MCF 10A (cell line): ENCODE measurements at regions of chr12 and their contacts with region 1.

Region 1: GRCh38 chr12:51531978-51532497 is 59.0 kb upstream of the SCN8A start:
- DNase-seq: peak; percentile 83
- H3K4me3 Mint-ChIP-seq: no peak overlapping the region
- H3K27ac Mint-ChIP-seq: no peak overlapping the region
- H3K4me1 Mint-ChIP-seq: peaks cover 11% of the 10 kb centered on the region
- H3K27me3 Mint-ChIP-seq: peaks cover 11% of the 10 kb centered on the region
- CTCF ChIP-seq: peak; percentile 85

Region 2: DNA sequence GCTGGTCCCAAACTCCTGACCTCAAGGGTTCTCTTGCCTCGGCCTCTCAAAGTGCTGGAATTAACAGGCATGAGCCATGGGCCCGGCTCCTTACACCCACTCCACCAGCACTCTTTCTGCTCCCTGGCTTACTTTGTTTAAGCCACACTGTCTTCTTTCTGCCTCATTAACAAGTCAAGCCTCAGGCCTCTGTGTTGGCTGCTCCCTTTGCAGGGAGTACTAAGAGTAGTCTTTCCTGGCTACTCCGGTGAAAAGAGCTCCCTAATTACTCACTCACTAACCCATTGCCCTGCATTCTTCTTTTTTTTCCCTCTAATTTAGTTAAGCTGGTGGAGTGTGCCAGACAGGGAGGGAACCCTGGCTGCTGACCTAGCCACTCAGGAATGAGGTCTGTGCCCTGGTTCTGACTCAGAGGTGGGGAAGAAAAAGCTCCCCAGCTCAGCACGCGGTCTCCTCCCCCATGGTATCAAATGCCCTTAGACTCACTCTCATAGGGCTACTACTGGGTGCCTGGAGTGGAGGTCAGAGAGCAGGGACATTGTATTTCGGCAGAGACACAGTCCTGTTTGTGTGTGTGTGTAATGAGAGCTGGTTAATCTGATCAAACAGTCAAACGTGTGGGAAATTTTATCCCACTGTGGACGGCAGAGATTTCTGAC is 160.6 kb before region 1 on chr12:
- CTCF ChIA-PET with region 1: interaction called, 10 read pairs
- POLR2A ChIA-PET with region 1: interaction called, 3 read pairs
- intact Hi-C with region 1: loop called (anchors 1 kb)
- DNase-seq: peak; percentile 96
- H3K4me3 Mint-ChIP-seq: peak overlapping the region; percentile 10
- H3K27ac Mint-ChIP-seq: peak overlapping the region; percentile 80
- H3K4me1 Mint-ChIP-seq: peaks cover 21% of the 10 kb centered on the region
- H3K27me3 Mint-ChIP-seq: no peaks in the 10 kb centered on the region
- CTCF ChIP-seq: no peak

Region 3: DNA sequence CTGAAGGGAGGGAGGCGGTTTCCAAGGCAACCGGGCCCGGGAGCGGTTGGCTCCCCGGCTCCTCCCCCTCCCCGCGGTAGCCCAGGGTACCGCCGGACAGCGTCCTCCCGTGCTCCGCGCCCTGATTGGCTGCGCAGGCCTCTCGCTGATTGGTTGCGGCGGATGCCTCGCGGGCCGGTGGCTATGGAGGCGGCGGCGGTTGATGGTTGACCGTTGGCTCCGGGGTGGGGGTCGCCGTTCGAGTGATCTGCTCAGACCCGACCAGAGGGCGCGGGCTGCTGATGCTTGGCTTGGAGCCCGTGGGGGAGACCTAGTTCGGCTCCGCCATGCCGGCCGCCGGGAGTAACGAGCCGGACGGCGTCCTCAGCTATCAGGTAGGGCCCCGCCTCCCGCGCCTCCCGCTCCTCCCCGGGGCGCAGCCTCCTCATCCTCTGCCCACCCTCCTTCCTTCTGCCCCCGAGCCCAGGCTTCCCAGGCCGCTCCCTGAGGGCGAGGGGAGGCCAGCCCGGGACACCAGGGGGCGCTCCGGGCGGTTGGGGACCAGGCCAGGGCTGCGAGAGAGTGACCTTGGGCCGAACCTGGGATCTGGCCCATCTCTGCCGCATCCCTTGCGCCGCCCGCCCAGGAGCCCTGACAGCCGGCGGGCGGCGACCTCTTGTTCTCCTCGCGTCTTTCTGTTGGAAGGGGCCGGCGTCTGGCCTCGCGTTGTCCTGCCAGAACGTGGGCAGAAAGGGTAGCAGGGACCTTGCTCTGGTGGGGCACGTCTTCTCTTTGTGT is 107.2 kb before region 1 on chr12 and contains the start of gene SLC4A8:
- CTCF ChIA-PET with region 1: interaction called, 72 read pairs
- POLR2A ChIA-PET with region 1: interaction called, 6 read pairs
- intact Hi-C with region 1: loop called (anchors 1 kb)
- DNase-seq: peak; percentile 58
- H3K4me3 Mint-ChIP-seq: peak within 1 kb of the TSS; percentile 68
- H3K27ac Mint-ChIP-seq: no peak within 1 kb of the TSS
- H3K4me1 Mint-ChIP-seq: no peaks in the 10 kb centered on the region
- H3K27me3 Mint-ChIP-seq: peaks cover 14% of the 10 kb centered on the region
- CTCF ChIP-seq: peak; percentile 88
- total RNA-seq, gene SLC4A8: 0.56 and 1.1 TPM in 2 replicates

Region 4: GRCh38 chr12:51521554-51522276 is 10.3 kb before region 1 on chr12:
- CTCF ChIA-PET with region 1: interaction called, 40 read pairs
- POLR2A ChIA-PET with region 1: no interaction called
- intact Hi-C with region 1: no loop called
- DNase-seq: no peak
- H3K4me3 Mint-ChIP-seq: no peak overlapping the region
- H3K27ac Mint-ChIP-seq: no peak overlapping the region
- H3K4me1 Mint-ChIP-seq: peaks cover 5% of the 10 kb centered on the region
- H3K27me3 Mint-ChIP-seq: no peaks in the 10 kb centered on the region
- CTCF ChIP-seq: no peak

Region 5: GRCh38 chr12:51678086-51678724 is 146.2 kb after region 1 on chr12:
- CTCF ChIA-PET with region 1: interaction called, 3 read pairs
- POLR2A ChIA-PET with region 1: interaction called, 3 read pairs
- intact Hi-C with region 1: loop called (anchors 5 kb)
- DNase-seq: peak; percentile 63
- H3K4me3 Mint-ChIP-seq: no peak overlapping the region
- H3K27ac Mint-ChIP-seq: no peak overlapping the region
- H3K4me1 Mint-ChIP-seq: peaks cover under 1% of the 10 kb centered on the region
- H3K27me3 Mint-ChIP-seq: peaks cover 42% of the 10 kb centered on the region
- CTCF ChIP-seq: peak; percentile 76

Region 6: DNA sequence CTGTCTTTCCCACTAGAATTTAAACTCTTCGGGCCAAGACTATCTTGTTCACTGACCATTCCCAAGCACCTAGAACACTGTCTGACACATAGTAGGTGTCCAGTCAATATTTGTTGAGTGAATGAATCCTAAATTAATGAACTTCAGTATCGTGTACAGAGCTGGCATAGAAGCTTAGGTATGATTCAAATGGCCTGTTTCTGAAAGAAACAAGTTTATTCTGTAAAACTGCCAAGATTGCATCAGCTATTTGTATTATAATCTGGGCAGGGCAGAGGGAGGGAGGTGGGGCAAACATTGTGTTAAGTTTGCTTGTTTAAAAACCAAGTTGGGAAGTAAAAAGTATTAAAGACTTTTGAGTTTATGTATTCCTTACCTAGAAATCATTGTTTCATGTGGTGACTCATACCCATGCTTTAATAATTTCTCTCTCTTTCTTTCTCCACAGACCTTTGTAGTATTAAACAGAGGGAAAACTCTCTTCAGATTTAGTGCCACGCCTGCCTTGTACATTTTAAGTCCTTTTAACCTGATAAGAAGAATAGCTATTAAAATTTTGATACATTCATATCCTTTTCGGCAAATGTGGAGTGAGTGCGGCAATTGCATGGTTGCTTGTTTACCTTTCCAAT is 151.8 kb after region 1 on chr12:
- CTCF ChIA-PET with region 1: interaction called, 10 read pairs
- POLR2A ChIA-PET with region 1: no interaction called
- intact Hi-C with region 1: loop called (anchors 5 kb)
- DNase-seq: peak; percentile 85
- H3K4me3 Mint-ChIP-seq: no peak overlapping the region
- H3K27ac Mint-ChIP-seq: no peak overlapping the region
- H3K4me1 Mint-ChIP-seq: peaks cover 33% of the 10 kb centered on the region
- H3K27me3 Mint-ChIP-seq: peaks cover 19% of the 10 kb centered on the region
- CTCF ChIP-seq: no peak

Region 7: GRCh38 chr12:51744235-51744634 is 212.2 kb after region 1 on chr12:
- CTCF ChIA-PET with region 1: no interaction called
- POLR2A ChIA-PET with region 1: no interaction called
- intact Hi-C with region 1: no loop called
- DNase-seq: no peak
- H3K4me3 Mint-ChIP-seq: no peak overlapping the region
- H3K27ac Mint-ChIP-seq: no peak overlapping the region
- H3K4me1 Mint-ChIP-seq: no peaks in the 10 kb centered on the region
- H3K27me3 Mint-ChIP-seq: peaks cover 28% of the 10 kb centered on the region
- CTCF ChIP-seq: no peak